PC-9 (cell line): ENCODE measurements at regions of chr19 and their contacts with region 1.

Region 1: GRCh38 chr19:11230621-11231386 is 8.6 kb upstream of the ANGPTL8 start:
- DNase-seq: no peak
- H3K4me3 ChIP-seq: no peak overlapping the region
- H3K27ac ChIP-seq: no peak overlapping the region
- H3K4me1 ChIP-seq: no peaks in the 10 kb centered on the region
- H3K27me3 ChIP-seq: no peaks in the 10 kb centered on the region
- CTCF ChIP-seq: no peak

Region 2: DNA sequence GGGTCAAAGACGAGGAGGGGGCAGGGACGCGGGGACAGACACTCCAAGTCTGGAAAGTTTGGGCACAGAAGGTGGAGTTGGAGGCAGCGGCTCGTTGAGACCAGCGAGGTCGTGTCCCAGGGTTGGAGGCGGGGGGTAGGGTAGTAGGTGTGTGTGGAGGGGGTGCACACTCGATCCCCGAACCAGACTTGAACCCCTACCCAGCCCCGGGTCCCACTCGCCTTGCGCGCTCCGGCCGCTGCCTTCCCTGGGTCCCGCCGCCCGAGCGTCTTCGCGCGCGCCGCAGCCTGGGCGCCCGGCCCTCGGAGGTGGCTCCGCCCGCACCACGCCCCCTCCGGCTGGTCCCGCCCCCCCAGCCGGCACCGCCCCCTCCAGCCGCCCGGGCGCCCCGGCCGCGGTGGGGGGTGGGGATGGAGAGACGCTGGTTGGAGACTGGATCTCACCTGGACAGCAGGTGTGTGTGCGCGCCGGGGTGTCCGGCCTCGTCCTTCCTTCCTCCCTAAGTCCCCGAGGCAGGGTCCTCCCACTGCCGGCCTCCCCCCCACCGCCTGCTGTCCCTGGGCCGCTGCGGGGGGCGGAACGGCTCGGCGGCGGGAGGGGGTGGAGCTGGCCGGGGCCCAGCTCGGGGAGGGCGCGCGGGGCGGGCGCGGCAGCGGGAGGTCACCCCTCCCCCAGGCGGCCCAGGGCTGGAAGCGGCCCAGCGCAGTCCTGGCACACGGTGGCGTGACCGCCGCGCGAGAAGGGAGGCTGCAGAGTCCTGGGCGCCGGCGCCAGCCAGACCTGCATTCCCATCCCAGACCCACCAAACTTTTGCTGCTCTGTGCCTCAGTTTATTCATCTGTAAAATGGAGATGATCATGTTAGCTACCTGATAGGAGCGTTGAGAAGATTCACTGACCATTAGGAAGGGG is 33.3 kb before region 1 on chr19 and contains the start of gene KANK2:
- CTCF ChIA-PET with region 1: no interaction called
- POLR2A ChIA-PET with region 1: interaction called, 10 read pairs
- intact Hi-C with region 1: no loop called
- DNase-seq: peak; percentile 84 to 95
- H3K4me3 ChIP-seq: peak within 1 kb of the TSS; percentile 76
- H3K27ac ChIP-seq: peak within 1 kb of the TSS; percentile 37
- H3K4me1 ChIP-seq: 0 out of 2 replicates have a peak, but pooled peaks cover 6% of the 10 kb centered on the region
- H3K27me3 ChIP-seq: no peaks in the 10 kb centered on the region
- CTCF ChIP-seq: no peak; the same call in 1 of the 2 replicates
- total RNA-seq, gene KANK2: 32.9 and 39.4 TPM in 2 replicates

Region 3: GRCh38 chr19:11296264-11296663 is 65.5 kb after region 1 on chr19:
- CTCF ChIA-PET with region 1: no interaction called
- POLR2A ChIA-PET with region 1: no interaction called
- intact Hi-C with region 1: no loop called
- DNase-seq: no peak
- H3K4me3 ChIP-seq: no peak overlapping the region
- H3K27ac ChIP-seq: no peak overlapping the region
- H3K4me1 ChIP-seq: peaks cover 30% of the 10 kb centered on the region
- H3K27me3 ChIP-seq: no peaks in the 10 kb centered on the region
- CTCF ChIP-seq: no peak

Region 4: DNA sequence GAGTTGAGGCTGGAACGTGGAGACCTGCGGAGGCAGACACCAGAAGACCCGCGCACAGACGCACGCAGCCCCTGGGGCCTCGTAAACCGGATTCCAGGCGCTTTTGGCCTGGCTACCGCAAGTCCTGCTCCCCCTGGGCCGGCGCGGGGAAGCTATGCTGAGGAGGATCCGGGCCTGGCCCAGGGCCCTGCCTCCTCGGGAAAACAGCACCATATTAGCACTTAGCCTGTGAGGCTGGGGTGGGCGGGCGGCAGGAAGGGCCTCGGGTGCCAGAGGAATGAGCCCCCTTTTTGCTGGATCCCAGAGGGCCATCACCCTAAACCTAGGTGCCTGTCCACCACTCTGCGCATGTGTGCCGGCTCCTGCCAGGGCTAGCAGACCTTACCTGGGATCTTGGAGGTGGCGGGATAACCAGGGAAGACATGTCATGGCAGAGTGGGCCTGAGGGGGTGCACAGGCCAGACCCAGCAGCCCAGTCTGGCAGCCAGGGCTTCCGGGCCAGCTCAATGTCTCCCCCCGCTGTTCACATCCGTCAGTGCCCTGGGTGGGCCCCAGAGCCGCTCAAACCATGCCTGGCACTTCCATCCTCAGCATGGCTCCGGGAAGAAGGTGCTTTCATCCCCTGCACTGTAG is 320.9 kb after region 1 on chr19:
- CTCF ChIA-PET with region 1: interaction called, 10 read pairs
- POLR2A ChIA-PET with region 1: no interaction called
- intact Hi-C with region 1: no loop called
- DNase-seq: no peak
- H3K4me3 ChIP-seq: no peak overlapping the region
- H3K27ac ChIP-seq: no peak overlapping the region
- H3K4me1 ChIP-seq: no peaks in the 10 kb centered on the region
- H3K27me3 ChIP-seq: no peaks in the 10 kb centered on the region
- CTCF ChIP-seq: no peak; the same call in 1 of the 2 replicates